BJ (cell line): ENCODE measurements at regions of chr9 and their contacts with region 1.

Region 1: DNA sequence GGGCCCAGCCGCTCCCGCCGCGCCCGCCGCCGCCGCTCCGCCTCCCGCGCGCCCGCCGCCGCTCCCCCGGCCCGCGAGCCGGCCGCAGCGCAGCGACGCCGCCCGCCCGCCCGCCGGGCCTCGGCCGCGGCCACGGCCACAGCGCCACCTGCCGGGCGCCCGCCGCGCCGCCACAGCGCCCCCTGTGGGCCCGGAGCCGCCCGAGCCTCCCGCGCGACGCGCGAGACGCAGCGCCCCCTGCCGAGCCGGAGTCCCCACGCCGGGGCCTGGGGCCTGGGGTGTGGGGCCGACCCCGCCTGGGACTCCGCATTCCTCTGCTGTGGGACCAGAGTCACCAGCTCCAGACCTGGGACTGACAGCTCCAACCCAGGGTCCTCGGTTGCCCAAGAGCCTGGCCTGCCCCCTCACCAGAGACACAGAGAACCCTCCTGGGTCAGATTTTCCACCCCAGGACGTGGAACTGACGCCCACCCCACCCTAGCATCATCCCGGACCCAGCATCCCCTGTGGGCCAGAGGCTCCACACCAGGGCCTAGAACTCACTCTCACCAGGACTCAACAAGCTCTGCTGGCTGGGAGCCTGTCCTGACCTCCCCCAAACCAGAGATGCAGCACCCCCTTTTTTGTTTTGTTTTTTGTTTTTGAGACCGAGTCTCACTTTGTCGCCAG is at the start of gene RAPGEF1:
- DNase-seq: no peak
- H3K4me3 ChIP-seq: peak within 1 kb of the TSS; percentile 56
- H3K27me3 ChIP-seq: peaks cover 2% of the 10 kb centered on the region
- CTCF ChIP-seq: peak; percentile 62
- polyA plus RNA-seq, gene RAPGEF1: 26.9 and 31.6 TPM in 2 replicates

Region 2: GRCh38 chr9:131598121-131598520 is 142.0 kb before region 1 on chr9:
- CTCF ChIA-PET with region 1: interaction called, 227 read pairs
- POLR2A ChIA-PET with region 1: no interaction called
- DNase-seq: no peak
- H3K4me3 ChIP-seq: no peak overlapping the region
- H3K27me3 ChIP-seq: no peaks in the 10 kb centered on the region
- CTCF ChIP-seq: no peak

Region 3: DNA sequence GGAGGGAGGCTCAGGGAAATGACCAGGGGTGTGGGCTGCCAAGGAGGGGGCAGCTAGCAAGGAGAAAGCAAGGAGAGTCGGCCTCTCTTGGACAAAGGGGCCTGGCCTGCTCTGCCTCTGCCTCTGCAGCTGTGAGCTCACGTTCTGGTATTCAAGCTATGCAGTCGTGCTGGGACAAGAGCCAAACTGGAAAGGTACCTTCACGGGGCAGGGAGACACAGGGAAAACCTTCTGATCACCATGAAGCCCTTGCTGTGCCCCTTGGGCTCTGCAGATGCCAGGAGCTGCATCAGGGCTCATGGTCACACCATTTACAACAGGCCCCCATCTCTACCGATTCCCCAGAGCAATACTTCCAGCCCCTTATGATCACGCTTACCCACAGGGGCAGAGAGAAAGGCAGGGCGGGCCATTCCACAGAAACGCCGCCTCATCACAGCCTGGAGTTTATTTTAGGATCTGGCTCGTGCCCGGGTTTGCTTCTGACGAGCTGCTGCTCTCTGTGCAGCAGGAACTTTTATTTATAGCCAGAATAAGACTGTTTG is 131.5 kb before region 1 on chr9:
- CTCF ChIA-PET with region 1: interaction called, 27 read pairs
- POLR2A ChIA-PET with region 1: interaction called, 3 read pairs
- DNase-seq: peak; percentile 55
- H3K4me3 ChIP-seq: no peak overlapping the region
- H3K27me3 ChIP-seq: no peaks in the 10 kb centered on the region
- CTCF ChIP-seq: no peak

Region 4: DNA sequence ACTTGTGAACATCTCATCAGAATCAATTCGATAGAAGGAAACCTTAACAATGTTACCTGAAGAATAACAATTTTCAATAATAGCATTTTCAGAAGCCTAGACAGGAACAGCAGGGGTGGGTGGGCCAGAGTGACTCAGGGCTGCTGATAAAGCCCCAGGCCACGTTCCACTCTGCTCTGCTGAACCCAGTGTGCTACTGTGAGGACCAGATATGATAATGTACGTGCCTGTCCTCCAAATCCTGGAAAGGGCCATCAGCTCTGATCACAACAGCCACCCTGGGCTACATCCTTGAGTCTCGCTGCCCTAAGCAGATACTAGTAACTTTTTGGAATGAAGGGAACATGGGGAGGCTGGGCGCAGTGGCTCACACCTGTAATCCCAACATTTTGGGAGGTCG is 103.5 kb before region 1 on chr9:
- CTCF ChIA-PET with region 1: interaction called, 14 read pairs
- POLR2A ChIA-PET with region 1: interaction called, 3 read pairs
- DNase-seq: no peak
- H3K4me3 ChIP-seq: no peak overlapping the region
- H3K27me3 ChIP-seq: no peaks in the 10 kb centered on the region
- CTCF ChIP-seq: no peak

Region 5: DNA sequence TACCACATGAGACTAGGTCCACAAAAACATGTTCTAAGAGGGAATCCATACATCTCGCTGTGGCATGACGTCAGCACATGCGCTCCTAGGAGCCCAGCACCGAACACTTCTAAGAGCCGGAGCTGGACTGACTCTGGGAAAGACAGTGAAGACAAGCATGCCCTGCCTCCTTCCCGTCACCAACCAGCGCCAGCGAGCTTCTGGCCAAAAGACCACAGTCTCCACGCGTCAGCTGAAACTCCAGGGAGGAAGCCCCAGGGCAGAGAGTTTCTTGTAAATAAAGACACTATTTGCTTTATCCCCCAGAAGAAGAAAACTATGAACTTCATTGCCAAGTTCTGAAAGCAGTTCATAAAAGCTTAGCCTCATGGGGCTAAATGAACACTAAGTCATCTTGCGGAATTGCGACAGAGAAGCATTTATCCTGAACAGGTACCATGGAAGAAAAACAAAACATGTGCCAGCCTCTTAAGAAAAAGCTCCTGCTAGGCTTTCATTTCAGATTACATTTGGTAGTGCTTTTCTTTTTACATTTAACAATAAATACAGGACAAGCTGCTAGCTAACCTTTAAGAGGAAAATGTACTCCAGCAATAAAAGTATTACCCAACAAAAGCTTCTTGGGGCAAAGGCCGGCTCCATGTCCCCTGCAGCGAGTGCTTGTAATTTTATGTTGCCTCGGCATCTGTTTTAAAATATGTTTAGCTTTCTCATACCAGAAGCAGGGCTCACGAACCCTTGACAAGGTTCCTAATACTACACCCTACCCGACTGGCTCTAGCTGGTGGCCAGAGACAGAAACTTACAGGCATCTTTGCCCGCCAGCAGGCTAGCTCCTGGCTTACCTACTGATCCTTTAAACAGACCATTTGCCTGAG is 98.3 kb before region 1 on chr9:
- CTCF ChIA-PET with region 1: interaction called, 14 read pairs
- POLR2A ChIA-PET with region 1: interaction called, 3 read pairs
- DNase-seq: peak; percentile 78
- H3K4me3 ChIP-seq: no peak overlapping the region
- H3K27me3 ChIP-seq: no peaks in the 10 kb centered on the region
- CTCF ChIP-seq: peak; percentile 34

Region 6: GRCh38 chr9:131678499-131679111 is 61.5 kb before region 1 on chr9:
- CTCF ChIA-PET with region 1: interaction called, 24 read pairs
- POLR2A ChIA-PET with region 1: no interaction called
- DNase-seq: peak; percentile 92
- H3K4me3 ChIP-seq: no peak overlapping the region
- H3K27me3 ChIP-seq: no peaks in the 10 kb centered on the region
- CTCF ChIP-seq: peak; percentile 7; the same call in 1 of the 2 replicates